Activated CD4-positive, alpha-beta T cell treated with anti-CD3 and anti-CD28 coated beads, Interleukin-2, amount 10 ng/mL, durations not matched to agents 7 days and 5 days (primary cell): ENCODE measurements at regions of chr12 and their contacts with region 1.

Region 1: DNA sequence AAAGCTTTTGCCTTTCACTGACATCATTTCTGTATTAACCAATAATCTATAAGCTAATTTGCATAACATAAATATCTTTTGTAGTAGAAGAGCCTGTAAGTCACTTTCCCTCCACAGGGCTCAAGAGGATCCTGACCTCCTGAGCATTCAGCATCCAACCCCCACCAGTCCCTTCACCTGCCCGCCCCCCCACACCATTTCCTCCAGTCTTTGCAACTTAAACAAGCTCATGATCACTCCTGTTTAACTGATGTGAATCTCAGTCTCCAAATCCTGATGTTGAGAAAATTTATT is 12.0 kb upstream of the CRY1 start:
- DNase-seq: no peak
- H3K4me3 Mint-ChIP-seq: no peak overlapping the region
- H3K27ac Mint-ChIP-seq: no peak overlapping the region
- H3K4me1 Mint-ChIP-seq: no peaks in the 10 kb centered on the region
- H3K27me3 Mint-ChIP-seq: peaks cover 12% of the 10 kb centered on the region

Region 2: GRCh38 chr12:106506691-106507090 is 598.7 kb before region 1 on chr12:
- CTCF ChIA-PET with region 1: no interaction called
- POLR2A ChIA-PET with region 1: no interaction called
- DNase-seq: no peak
- H3K4me3 Mint-ChIP-seq: no peak overlapping the region
- H3K27ac Mint-ChIP-seq: no peak overlapping the region
- H3K4me1 Mint-ChIP-seq: no peaks in the 10 kb centered on the region
- H3K27me3 Mint-ChIP-seq: no peaks in the 10 kb centered on the region

Region 3: GRCh38 chr12:107042801-107043200 is 62.6 kb before region 1 on chr12:
- CTCF ChIA-PET with region 1: no interaction called
- POLR2A ChIA-PET with region 1: no interaction called
- DNase-seq: no peak
- H3K4me3 Mint-ChIP-seq: no peak overlapping the region
- H3K27ac Mint-ChIP-seq: no peak overlapping the region
- H3K4me1 Mint-ChIP-seq: no peaks in the 10 kb centered on the region
- H3K27me3 Mint-ChIP-seq: no peaks in the 10 kb centered on the region

Region 4: GRCh38 chr12:107093417-107094182 is 11.8 kb before region 1 on chr12 and contains the start of gene CRY1:
- CTCF ChIA-PET with region 1: interaction called, 12 read pairs
- POLR2A ChIA-PET with region 1: no interaction called
- DNase-seq: peak; percentile 94
- H3K4me3 Mint-ChIP-seq: no peak within 1 kb of the TSS
- H3K27ac Mint-ChIP-seq: no peak within 1 kb of the TSS
- H3K4me1 Mint-ChIP-seq: peaks cover 11% of the 10 kb centered on the region
- H3K27me3 Mint-ChIP-seq: peaks cover 6% of the 10 kb centered on the region
- total RNA-seq, gene CRY1: 12.2 to 12.9 TPM

Region 5: GRCh38 chr12:107126796-107127481 is 21.6 kb after region 1 on chr12:
- CTCF ChIA-PET with region 1: no interaction called
- POLR2A ChIA-PET with region 1: interaction called, 10 read pairs
- DNase-seq: peak; percentile 9
- H3K4me3 Mint-ChIP-seq: no peak overlapping the region
- H3K27ac Mint-ChIP-seq: no peak overlapping the region
- H3K4me1 Mint-ChIP-seq: no peaks in the 10 kb centered on the region
- H3K27me3 Mint-ChIP-seq: peaks cover 17% of the 10 kb centered on the region